Esophagus squamous epithelium (tissue), 5 donors: ENCODE measurements at regions of chr5 and their contacts with region 1.

Region 1: GRCh38 chr5:147087351-147087750 is 147.5 kb upstream of the STK32A start:
- DNase-seq: no peak
- H3K4me3 ChIP-seq: no peak overlapping the region
- H3K27ac ChIP-seq: no peak overlapping the region
- H3K4me1 ChIP-seq: no peaks in the 10 kb centered on the region
- H3K27me3 ChIP-seq: no peaks in the 10 kb centered on the region
- CTCF ChIP-seq: no peak
- POLR2A ChIP-seq: no peak

Region 2: DNA sequence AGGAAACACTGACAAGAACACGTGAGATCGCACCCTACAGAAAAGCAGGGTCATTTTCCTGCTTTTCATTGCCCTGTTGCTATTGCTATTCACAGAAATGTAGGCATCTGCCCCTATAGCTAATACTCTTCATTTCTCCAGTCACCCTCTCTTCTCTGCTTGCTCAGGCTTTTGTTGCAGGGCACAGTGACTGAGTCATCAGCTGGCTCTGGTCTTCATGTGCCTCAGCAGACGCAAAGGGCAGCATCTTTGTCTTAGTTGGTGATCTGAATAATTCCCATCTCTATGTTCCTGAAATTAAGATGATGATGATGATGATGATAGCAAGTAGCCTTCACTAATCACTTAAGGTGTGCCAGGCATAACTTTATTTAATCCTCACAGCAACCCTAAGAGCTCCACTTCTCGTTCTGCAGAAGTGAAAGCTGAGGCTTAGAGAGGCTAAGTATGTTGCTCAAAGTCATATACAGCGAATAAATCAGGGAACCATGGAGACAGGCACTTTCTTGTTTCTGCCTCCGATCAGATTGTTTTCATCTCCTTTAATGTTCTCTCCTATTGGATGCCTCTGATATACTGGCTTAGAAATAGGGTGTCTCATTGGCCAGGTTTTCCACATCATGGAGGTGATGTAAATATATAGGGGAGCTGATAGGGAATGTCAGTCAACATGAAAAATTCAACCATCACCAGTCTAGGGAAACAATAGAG is 14.5 kb after region 1 on chr5:
- intact Hi-C with region 1: loop called (anchors 2 kb)
- DNase-seq: no peak
- H3K4me3 ChIP-seq: no peak overlapping the region
- H3K27ac ChIP-seq: no peak overlapping the region
- H3K4me1 ChIP-seq: peaks cover 0 to 5% (median 0%) of the 10 kb centered on the region in 3 donors
- H3K27me3 ChIP-seq: no peaks in the 10 kb centered on the region
- CTCF ChIP-seq: no peak
- POLR2A ChIP-seq: no peak